GM12878 (cell line): ENCODE measurements at regions of chr3 and their contacts with region 1.

Region 1: DNA sequence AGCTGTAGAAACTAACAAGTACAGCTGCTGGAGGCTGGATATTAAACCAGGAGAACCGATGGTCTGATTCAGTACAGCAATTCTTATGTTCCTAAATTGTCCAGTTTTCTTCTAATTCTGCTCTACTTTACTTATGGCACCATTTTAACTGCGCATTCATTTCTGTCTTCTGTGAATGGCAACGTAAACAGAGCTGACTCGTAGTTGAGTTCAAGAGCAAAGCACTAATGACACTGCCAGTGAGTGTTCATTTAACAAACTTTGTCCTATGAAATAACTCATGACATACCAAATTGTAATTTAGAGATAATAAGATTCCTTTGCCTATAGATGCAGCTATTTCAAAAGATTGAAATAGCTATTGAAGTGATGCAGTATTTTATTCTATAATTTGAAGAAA is 48.7 kb downstream of the BCHE start:
- DNase-seq: no peak
- ATAC-seq: peak; percentile 67
- H3K4me3 ChIP-seq: no peak overlapping the region
- H3K27ac ChIP-seq: no peak overlapping the region
- H3K4me1 ChIP-seq: no peaks in the 10 kb centered on the region
- H3K27me3 ChIP-seq: no peaks in the 10 kb centered on the region
- CTCF ChIP-seq: no peak
- EP300 ChIP-seq: no peak
- POLR2A ChIP-seq: no peak
- RAD21 ChIP-seq: no peak

Region 2: DNA sequence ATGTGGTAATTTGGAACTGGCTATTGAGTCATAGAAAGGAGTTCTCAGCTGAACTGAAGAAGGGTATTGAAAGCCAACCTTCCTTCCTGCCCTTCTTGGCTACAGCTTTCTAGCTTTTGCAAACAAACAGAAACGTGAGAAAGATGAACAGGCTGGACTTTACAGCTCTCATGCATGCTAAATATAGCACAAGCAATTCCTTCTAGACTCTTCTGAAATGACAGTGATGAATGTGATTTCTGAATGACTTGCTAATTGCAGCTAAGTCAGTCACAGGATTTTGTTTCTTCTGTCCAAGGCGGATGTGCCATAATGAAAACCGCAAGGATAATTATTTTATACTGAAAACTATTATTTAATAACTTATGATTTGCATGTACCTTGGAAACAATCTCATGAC is 12.4 kb after region 1 on chr3:
- CTCF ChIA-PET with region 1: interaction called, 7 read pairs
- POLR2A ChIA-PET with region 1: interaction called, 13 read pairs
- RAD21 ChIA-PET with region 1: interaction called, 67 read pairs
- SMC1A ChIA-PET with region 1: interaction called, 104 read pairs
- in situ Hi-C with region 1: no loop called
- intact Hi-C with region 1: no loop called
- DNase-seq: no peak
- ATAC-seq: peak; percentile 63
- H3K4me3 ChIP-seq: no peak overlapping the region
- H3K27ac ChIP-seq: no peak overlapping the region
- H3K4me1 ChIP-seq: no peaks in the 10 kb centered on the region
- H3K27me3 ChIP-seq: no peaks in the 10 kb centered on the region
- CTCF ChIP-seq: no peak
- EP300 ChIP-seq: no peak
- POLR2A ChIP-seq: no peak
- RAD21 ChIP-seq: no peak

Region 3: GRCh38 chr3:165820671-165821123 is 32.2 kb after region 1 on chr3:
- CTCF ChIA-PET with region 1: interaction called, 3 read pairs
- POLR2A ChIA-PET with region 1: interaction called, 3 read pairs
- RAD21 ChIA-PET with region 1: interaction called, 7 read pairs
- SMC1A ChIA-PET with region 1: interaction called, 26 read pairs
- in situ Hi-C with region 1: no loop called
- intact Hi-C with region 1: no loop called
- DNase-seq: no peak
- ATAC-seq: peak; percentile 44
- H3K4me3 ChIP-seq: no peak overlapping the region
- H3K27ac ChIP-seq: no peak overlapping the region
- H3K4me1 ChIP-seq: no peaks in the 10 kb centered on the region
- H3K27me3 ChIP-seq: no peaks in the 10 kb centered on the region
- CTCF ChIP-seq: no peak
- EP300 ChIP-seq: peak; percentile 60 to 64; a peak in 2 of 4 replicates
- POLR2A ChIP-seq: no peak
- RAD21 ChIP-seq: no peak